ENCODE measurements at regions of chr17 and their contacts with region 1.

Region 1: GRCh38 chr17:77186141-77186604 is 45.4 kb downstream of the SEC14L1 start:
- DNase-seq: peak; percentile 18 to 27
- ATAC-seq: peak; percentile 42 to 93 (median 55)
- H3K4me3 ChIP-seq: no peak overlapping the region
- H3K27ac ChIP-seq: peak overlapping the region in 9 of 10 donors; percentile 5 to 77 (median 42)
- H3K4me1 ChIP-seq: peaks cover 21 to 90% (median 76%) of the 10 kb centered on the region in 9 donors
- H3K27me3 ChIP-seq: no peaks in the 10 kb centered on the region
- CTCF ChIP-seq: no peak

Region 2: DNA sequence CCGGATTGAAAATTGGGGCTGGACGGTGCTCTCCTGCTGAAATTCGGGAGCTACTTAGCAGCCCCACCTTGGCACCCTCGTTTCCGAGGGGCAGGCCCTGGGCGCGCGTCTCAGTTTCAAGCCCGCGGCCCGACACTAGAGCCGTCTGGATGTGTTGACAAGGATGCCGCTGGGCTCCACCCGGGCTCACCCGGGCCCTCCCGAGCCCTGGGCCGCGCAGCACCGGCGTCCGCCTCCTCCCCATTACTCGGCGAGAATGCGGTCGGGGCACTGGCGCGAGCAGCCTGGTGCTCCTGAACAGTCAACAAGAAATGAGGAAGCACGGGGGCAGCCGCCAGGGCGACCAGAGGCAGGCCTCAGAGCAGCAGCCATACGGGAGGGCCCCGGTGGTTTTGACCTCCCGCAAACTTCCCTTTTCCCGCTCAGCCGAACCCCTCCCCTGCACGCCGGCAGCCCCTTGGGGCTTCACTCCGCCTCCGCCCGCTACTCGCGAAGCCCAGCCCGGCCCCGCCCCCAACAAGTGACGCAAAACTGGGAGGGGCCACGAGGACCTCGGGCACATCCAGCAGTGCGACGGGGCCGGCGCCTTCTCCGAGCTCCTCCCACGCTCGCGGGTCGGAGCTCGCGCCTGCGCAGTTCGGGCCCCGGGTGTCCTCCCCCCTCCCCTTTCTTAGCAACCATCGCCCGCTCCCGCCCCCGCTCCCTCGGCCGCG is 45.9 kb before region 1 on chr17:
- intact Hi-C with region 1: loop called in 1 of 10 experiments (anchors 10 kb)
- DNase-seq: peak; percentile 99 to 100
- ATAC-seq: peak; percentile 96 to 99 (median 98)
- H3K4me3 ChIP-seq: peak overlapping the region; percentile 49 to 89 (median 76)
- H3K27ac ChIP-seq: peak overlapping the region; percentile 89 to 97 (median 96)
- H3K4me1 ChIP-seq: peaks cover 4 to 75% (median 18%) of the 10 kb centered on the region in 9 donors
- H3K27me3 ChIP-seq: no peaks in the 10 kb centered on the region
- CTCF ChIP-seq: peak in 2 of 9 donors; percentile 13

Region 3: DNA sequence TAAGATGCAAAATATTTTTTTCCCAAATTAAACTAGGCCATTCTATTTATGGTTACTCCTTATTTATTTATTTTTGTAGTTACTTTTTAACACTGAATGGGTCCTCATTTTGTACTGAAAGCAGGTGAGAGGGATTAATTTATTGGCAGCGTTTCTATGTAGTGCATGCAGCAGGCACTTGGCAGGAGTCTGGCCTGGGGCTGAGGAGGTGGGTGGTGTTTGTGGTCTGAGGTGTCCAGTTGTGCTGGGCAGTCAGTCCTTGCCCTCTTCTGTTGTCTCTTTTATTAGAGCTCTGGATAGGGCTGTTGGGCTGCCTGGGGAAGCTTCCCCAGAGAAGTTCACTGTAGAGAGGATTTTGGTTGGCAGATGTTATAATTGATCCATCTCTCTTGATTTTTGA is 32.7 kb before region 1 on chr17:
- intact Hi-C with region 1: loop called in 3 of 10 experiments (anchors 5 to 10 kb)
- DNase-seq: no peak
- ATAC-seq: no peak
- H3K4me3 ChIP-seq: peak overlapping the region in 1 of 10 donors; percentile 5
- H3K27ac ChIP-seq: peak overlapping the region in 6 of 10 donors; percentile 4 to 96 (median 26)
- H3K4me1 ChIP-seq: peaks cover 18 to 90% (median 72%) of the 10 kb centered on the region in 9 donors
- H3K27me3 ChIP-seq: no peaks in the 10 kb centered on the region
- CTCF ChIP-seq: no peak

Region 4: GRCh38 chr17:77235370-77235941 is 49.3 kb after region 1 on chr17:
- intact Hi-C with region 1: no loop called
- DNase-seq: no peak
- ATAC-seq: peak in 7 of 8 donors; percentile 36 to 85 (median 58)
- H3K4me3 ChIP-seq: peak overlapping the region in 7 of 10 donors; percentile 1 to 42 (median 35)
- H3K27ac ChIP-seq: peak overlapping the region; percentile 10 to 89 (median 72)
- H3K4me1 ChIP-seq: peaks cover 0 to 38% (median 22%) of the 10 kb centered on the region in 9 donors
- H3K27me3 ChIP-seq: no peaks in the 10 kb centered on the region
- CTCF ChIP-seq: no peak